Mammary epithelial cell (primary cell): ENCODE measurements at regions of chr20 and their contacts with region 1.

Region 1: GRCh38 chr20:16387666-16388065 is 185.6 kb downstream of the KIF16B start:
- DNase-seq: no peak
- H3K4me3 ChIP-seq: no peak overlapping the region
- H3K27ac ChIP-seq: no peak overlapping the region
- H3K4me1 ChIP-seq: no peaks in the 10 kb centered on the region
- H3K27me3 ChIP-seq: no peaks in the 10 kb centered on the region
- CTCF ChIP-seq: no peak

Region 2: DNA sequence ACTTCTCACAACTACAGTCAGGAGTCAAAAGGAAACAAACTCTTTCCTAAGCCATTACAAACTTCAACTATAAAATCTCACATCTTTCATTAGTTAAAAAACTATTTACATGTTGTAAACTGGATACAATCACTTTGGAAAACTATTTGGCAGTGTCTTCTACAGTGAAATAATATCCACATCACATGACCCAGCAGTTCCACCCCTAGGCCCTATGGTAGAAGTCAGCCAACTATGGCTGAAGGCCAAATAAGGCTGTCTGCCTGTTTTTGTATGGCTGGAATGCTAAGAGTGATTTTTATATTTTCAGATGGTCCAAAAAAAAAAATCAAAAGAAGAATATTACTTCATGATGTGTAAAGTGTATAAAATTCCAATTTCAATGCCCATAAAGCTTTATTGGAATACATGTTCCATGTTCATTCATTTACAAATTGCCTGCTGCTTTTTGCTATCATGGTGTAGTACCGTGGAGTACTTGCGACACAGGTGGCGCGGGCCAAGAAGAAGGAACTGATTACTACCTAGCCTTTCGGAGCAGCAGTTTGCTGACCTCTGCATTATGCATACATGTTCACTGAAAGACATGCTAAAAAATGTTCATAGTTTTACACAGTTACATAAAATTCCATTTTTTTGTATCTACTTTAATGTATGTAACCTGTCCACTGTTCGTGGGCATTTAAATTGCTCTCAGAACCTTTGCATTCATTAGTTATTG is 56.6 kb after region 1 on chr20:
- CTCF ChIA-PET with region 1: no interaction called
- dilution Hi-C with region 1: no loop called
- in situ Hi-C with region 1: loop called in 1 of 2 experiments (anchors 10 kb)
- intact Hi-C with region 1: no loop called
- DNase-seq: no peak
- H3K4me3 ChIP-seq: no peak overlapping the region
- H3K27ac ChIP-seq: no peak overlapping the region
- H3K4me1 ChIP-seq: no peaks in the 10 kb centered on the region
- H3K27me3 ChIP-seq: no peaks in the 10 kb centered on the region
- CTCF ChIP-seq: no peak